ENCODE measurements at regions of chr19 and their contacts with region 1.

Region 1: GRCh38 chr19:42244347-42245220 is 2.2 kb upstream of the GSK3A start:
- DNase-seq: peak; percentile 81
- ATAC-seq: peak; percentile 40
- H3K4me3 Mint-ChIP-seq: peak overlapping the region; percentile 99
- H3K27ac Mint-ChIP-seq: peak overlapping the region; percentile 99
- H3K4me1 Mint-ChIP-seq: peaks cover 50% of the 10 kb centered on the region
- H3K27me3 Mint-ChIP-seq: no peaks in the 10 kb centered on the region
- CTCF ChIP-seq: no peak

Region 2: DNA sequence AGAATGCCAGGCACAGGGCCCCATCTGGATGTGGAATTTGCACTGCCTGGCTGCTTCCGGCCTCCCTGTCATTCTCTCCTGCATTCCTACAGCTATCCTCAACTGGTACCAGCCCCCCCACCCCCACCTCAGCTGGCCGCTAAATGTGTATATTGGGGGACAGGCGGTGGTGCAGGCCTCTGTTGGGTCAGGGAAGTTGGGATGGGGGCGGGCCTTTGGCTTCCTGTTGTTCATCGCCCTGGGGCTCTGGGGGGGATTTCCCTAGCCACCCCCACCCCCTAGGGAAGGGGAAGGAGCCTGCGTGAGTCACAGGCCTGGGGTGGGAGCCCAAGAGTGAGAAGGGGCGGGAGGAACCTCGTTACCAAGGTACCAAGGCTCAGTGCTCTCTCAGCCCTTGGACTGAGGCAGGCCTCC is 122.9 kb before region 1 on chr19:
- CTCF ChIA-PET with region 1: no interaction called
- POLR2A ChIA-PET with region 1: interaction called, 23 read pairs
- intact Hi-C with region 1: no loop called
- DNase-seq: peak; percentile 85
- ATAC-seq: peak; percentile 81
- H3K4me3 Mint-ChIP-seq: peak overlapping the region; percentile 80
- H3K27ac Mint-ChIP-seq: peak overlapping the region; percentile 96
- H3K4me1 Mint-ChIP-seq: peaks cover 97% of the 10 kb centered on the region
- H3K27me3 Mint-ChIP-seq: no peaks in the 10 kb centered on the region
- CTCF ChIP-seq: no peak

Region 3: GRCh38 chr19:42219812-42220750 is 24.5 kb before region 1 on chr19 and contains the start of gene ZNF526:
- CTCF ChIA-PET with region 1: interaction called, 4 read pairs
- POLR2A ChIA-PET with region 1: interaction called, 13 read pairs
- intact Hi-C with region 1: loop called (anchors 1 kb)
- DNase-seq: peak; percentile 93
- ATAC-seq: peak; percentile 83
- H3K4me3 Mint-ChIP-seq: peak within 1 kb of the TSS; percentile 99
- H3K27ac Mint-ChIP-seq: peak within 1 kb of the TSS; percentile 93
- H3K4me1 Mint-ChIP-seq: peaks cover 55% of the 10 kb centered on the region
- H3K27me3 Mint-ChIP-seq: no peaks in the 10 kb centered on the region
- CTCF ChIP-seq: no peak
- total RNA-seq, gene ZNF526: 19.6 and 22.7 TPM in 2 replicates

Region 4: GRCh38 chr19:42283143-42284065 is 38.8 kb after region 1 on chr19:
- CTCF ChIA-PET with region 1: interaction called, 29 read pairs
- POLR2A ChIA-PET with region 1: interaction called, 68 read pairs
- intact Hi-C with region 1: loop called (anchors 1 kb)
- DNase-seq: peak; percentile 91
- ATAC-seq: peak; percentile 64
- H3K4me3 Mint-ChIP-seq: no peak overlapping the region
- H3K27ac Mint-ChIP-seq: no peak overlapping the region
- H3K4me1 Mint-ChIP-seq: peaks cover 55% of the 10 kb centered on the region
- H3K27me3 Mint-ChIP-seq: no peaks in the 10 kb centered on the region
- CTCF ChIP-seq: no peak

Region 5: GRCh38 chr19:42325273-42325895 is 80.8 kb after region 1 on chr19 and contains the start of gene MEGF8:
- CTCF ChIA-PET with region 1: no interaction called
- POLR2A ChIA-PET with region 1: interaction called, 4 read pairs
- intact Hi-C with region 1: loop called (anchors 1 kb)
- DNase-seq: peak; percentile 94
- ATAC-seq: peak; percentile 90
- H3K4me3 Mint-ChIP-seq: peak within 1 kb of the TSS; percentile 87
- H3K27ac Mint-ChIP-seq: peak within 1 kb of the TSS; percentile 75
- H3K4me1 Mint-ChIP-seq: peaks cover 21% of the 10 kb centered on the region
- H3K27me3 Mint-ChIP-seq: peaks cover 7% of the 10 kb centered on the region
- CTCF ChIP-seq: peak; percentile 5
- total RNA-seq, gene MEGF8: 13.0 and 15.1 TPM in 2 replicates

Measured in activated B cell treated with CpG ODN at 0.5 μM for 24 hours (primary cell).